Posterior vena cava (tissue), 2 donors: ENCODE measurements at regions of chr5 and their contacts with region 1.

Region 1: DNA sequence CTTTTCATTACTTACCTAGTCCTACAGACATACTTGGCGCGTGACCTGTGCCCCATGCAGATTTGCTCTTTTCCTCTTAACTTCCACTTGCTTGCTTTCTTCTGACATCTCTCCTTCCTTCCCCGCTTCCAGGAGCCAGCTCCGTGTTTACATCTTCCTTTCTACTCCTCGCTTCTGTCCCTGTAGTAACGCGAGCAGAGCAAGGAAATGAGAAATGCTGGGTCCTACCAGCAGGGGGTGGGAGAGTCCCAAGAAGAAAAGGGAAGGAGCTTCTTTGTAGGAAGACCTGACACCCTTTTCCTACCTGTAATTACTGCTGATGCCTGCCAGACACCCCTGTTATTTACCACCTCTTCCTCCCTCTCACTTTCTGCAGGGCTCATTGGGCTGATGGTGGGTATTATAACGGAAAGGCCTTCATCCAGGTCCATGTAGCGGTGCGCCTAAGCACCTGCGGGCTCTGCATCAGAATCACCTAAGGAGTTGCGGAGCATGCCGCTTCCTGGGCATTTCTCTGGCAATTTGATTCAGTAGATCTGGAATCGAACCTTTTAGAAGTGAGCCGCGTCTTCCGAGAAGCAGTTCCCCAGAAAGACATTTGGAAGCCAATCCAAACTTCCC is 1260.8 kb upstream of the WWC1 start:
- DNase-seq: no peak

Region 2: GRCh38 chr5:166488511-166488910 is 542.1 kb before region 1 on chr5:
- intact Hi-C with region 1: no loop called
- DNase-seq: no peak

Region 3: DNA sequence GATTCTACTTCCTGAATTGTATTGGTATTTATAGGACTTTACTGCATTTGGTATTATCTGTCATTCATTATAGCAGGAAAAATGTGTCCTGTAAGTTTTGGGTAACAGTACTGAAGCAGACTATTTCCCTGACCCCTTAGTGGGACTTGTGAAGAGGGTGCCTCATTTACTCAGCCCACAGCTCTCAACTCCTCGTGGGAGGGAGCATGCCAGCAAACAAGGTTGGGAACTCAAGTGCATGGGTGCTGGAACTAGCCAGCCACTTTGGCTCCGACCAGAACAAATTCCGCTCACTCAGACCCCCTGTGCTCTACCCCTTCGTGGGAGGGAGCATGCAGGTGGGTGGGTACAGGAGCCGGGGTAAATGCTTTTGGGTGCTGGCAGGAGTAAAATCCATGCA is 512.6 kb before region 1 on chr5:
- intact Hi-C with region 1: no loop called
- DNase-seq: no peak

Region 4: DNA sequence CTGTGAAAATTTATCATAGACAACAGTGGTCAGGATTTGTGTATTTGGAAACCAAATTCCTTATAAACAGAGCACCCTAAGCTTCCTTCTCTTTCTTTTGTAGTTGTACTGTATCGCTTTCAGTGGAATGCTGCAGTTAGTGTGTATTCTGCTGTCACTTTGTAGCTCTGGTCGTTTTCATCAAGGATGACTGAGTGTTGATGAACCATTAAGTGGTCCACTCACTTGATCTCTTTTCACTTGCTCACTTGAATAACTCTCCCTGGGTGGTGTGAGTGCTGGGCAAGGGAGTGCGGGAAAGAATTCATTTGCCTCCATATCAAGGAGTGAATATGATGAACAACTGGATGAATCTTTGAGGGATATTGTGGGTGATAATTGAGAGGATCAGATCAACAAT is 35.2 kb after region 1 on chr5:
- intact Hi-C with region 1: loop called in 1 of 2 experiments (anchors 2 kb)
- DNase-seq: no peak